ENCODE measurements at regions of chr21 and their contacts with region 1.

Region 1: GRCh38 chr21:42117229-42117966 is 46.3 kb downstream of the UMODL1 start:
- DNase-seq: peak; percentile 82
- ATAC-seq: peak; percentile 77
- H3K4me3 Mint-ChIP-seq: no peak overlapping the region
- H3K27ac Mint-ChIP-seq: no peak overlapping the region
- H3K4me1 Mint-ChIP-seq: peaks cover 43% of the 10 kb centered on the region
- H3K27me3 Mint-ChIP-seq: peaks cover 75% of the 10 kb centered on the region

Region 2: GRCh38 chr21:41816220-41817165 is 300.9 kb before region 1 on chr21:
- CTCF ChIA-PET with region 1: interaction called, 61 read pairs
- DNase-seq: peak; percentile 64
- ATAC-seq: peak; percentile 77
- H3K4me3 Mint-ChIP-seq: no peak overlapping the region
- H3K27ac Mint-ChIP-seq: no peak overlapping the region
- H3K4me1 Mint-ChIP-seq: peaks cover 1% of the 10 kb centered on the region
- H3K27me3 Mint-ChIP-seq: no peaks in the 10 kb centered on the region

Region 3: GRCh38 chr21:41877901-41878830 is 239.2 kb before region 1 on chr21:
- CTCF ChIA-PET with region 1: interaction called, 14 read pairs
- DNase-seq: no peak
- ATAC-seq: peak; percentile 31
- H3K4me3 Mint-ChIP-seq: peak overlapping the region; percentile 80
- H3K27ac Mint-ChIP-seq: peak overlapping the region; percentile 82
- H3K4me1 Mint-ChIP-seq: peaks cover 22% of the 10 kb centered on the region
- H3K27me3 Mint-ChIP-seq: no peaks in the 10 kb centered on the region

Region 4: DNA sequence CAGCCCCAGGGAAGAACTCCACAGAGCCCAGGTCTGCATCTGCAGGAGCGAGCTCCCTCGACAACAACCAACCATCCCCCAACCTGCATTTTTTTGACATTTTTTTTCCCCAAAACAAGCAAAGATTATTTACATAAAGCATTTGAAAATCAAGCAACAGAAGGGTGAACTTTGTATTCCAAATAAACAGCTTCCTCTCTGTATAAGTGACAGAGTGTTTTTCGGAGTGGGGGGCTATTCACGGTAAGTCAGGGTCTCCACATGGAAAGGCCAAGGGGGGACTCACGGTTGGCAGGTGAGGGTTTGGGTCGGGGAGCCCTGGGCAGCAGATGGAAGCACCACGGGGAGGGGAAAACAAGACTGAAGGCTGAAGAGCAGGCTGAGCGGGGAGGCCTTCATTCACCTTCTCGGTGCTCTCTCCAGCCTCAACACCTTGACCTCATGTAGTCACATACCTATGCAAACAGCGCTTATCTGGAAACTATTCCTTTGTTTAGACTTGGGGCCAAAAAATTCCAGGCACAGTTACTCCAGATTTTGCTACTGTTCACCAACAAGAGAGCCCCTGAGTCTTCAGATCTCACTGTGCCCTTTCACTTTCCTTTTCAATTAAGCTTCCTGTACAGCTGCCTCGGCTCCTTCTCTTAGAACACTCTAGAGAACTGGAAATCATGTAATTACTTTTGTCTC is 191.1 kb before region 1 on chr21:
- CTCF ChIA-PET with region 1: interaction called, 17 read pairs
- DNase-seq: peak; percentile 51
- ATAC-seq: peak; percentile 93
- H3K4me3 Mint-ChIP-seq: peak overlapping the region; percentile 92
- H3K27ac Mint-ChIP-seq: peak overlapping the region; percentile 97
- H3K4me1 Mint-ChIP-seq: peaks cover 58% of the 10 kb centered on the region
- H3K27me3 Mint-ChIP-seq: peaks cover 3% of the 10 kb centered on the region

Region 5: GRCh38 chr21:42086969-42087368 is 30.4 kb before region 1 on chr21:
- CTCF ChIA-PET with region 1: interaction called, 10 read pairs
- DNase-seq: no peak
- ATAC-seq: no peak
- H3K4me3 Mint-ChIP-seq: no peak overlapping the region
- H3K27ac Mint-ChIP-seq: no peak overlapping the region
- H3K4me1 Mint-ChIP-seq: peaks cover 6% of the 10 kb centered on the region
- H3K27me3 Mint-ChIP-seq: peaks cover 3% of the 10 kb centered on the region

Region 6: DNA sequence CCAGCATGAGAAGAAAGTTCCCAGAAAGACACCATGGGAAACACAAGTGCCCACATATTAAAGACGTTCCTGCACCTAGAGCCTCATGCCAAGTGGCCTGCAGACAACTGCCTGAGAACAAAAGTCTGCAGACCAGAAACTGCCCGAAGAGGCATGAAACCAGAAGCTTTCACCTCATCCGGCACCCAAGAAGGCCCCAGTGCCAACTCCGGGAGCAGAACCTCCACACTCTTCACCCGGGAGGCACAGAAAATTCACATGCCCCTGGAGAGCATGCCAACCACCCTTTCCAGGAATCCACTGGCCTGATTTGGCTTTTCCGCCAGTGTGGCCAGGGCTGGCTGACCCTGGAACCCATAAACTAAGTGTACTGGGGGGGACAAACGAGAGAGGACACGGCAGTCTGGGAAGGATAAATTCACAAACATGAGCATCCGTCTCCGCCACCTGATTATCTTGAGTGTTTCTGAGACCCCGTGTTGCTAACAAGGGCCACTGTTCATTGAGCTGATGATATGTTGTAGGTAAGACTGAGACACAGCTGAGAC is 226.6 kb after region 1 on chr21:
- CTCF ChIA-PET with region 1: no interaction called
- DNase-seq: peak; percentile 11
- ATAC-seq: no peak
- H3K4me3 Mint-ChIP-seq: no peak overlapping the region
- H3K27ac Mint-ChIP-seq: no peak overlapping the region
- H3K4me1 Mint-ChIP-seq: peaks cover 12% of the 10 kb centered on the region
- H3K27me3 Mint-ChIP-seq: no peaks in the 10 kb centered on the region